ENCODE measurements at regions of chr13 and their contacts with region 1.

Region 1: GRCh38 chr13:39263033-39263432 is 224.8 kb downstream of the NHLRC3 start:
- DNase-seq: peak; percentile 18 to 40 (median 30)
- ATAC-seq: peak; percentile 84
- H3K4me3 ChIP-seq: no peak overlapping the region
- H3K27ac ChIP-seq: no peak overlapping the region
- H3K4me1 ChIP-seq: no peaks in the 10 kb centered on the region
- H3K27me3 ChIP-seq: no peaks in the 10 kb centered on the region
- CTCF ChIP-seq: peak; percentile 33 to 47 (median 41); a peak in 5 of 6 replicates
- EP300 ChIP-seq: no peak
- POLR2A ChIP-seq: no peak
- RAD21 ChIP-seq: peak in 1 of 2 experiments; percentile 46; a peak in 2 of 4 replicates

Region 2: GRCh38 chr13:38914070-38914469 is 349.0 kb before region 1 on chr13:
- CTCF ChIA-PET with region 1: no interaction called
- POLR2A ChIA-PET with region 1: no interaction called
- in situ Hi-C with region 1: no loop called
- intact Hi-C with region 1: no loop called
- DNase-seq: no peak
- ATAC-seq: no peak
- H3K4me3 ChIP-seq: no peak overlapping the region
- H3K27ac ChIP-seq: no peak overlapping the region
- H3K4me1 ChIP-seq: no peaks in the 10 kb centered on the region
- H3K27me3 ChIP-seq: no peaks in the 10 kb centered on the region
- CTCF ChIP-seq: no peak
- EP300 ChIP-seq: no peak
- POLR2A ChIP-seq: no peak
- RAD21 ChIP-seq: no peak

Region 3: DNA sequence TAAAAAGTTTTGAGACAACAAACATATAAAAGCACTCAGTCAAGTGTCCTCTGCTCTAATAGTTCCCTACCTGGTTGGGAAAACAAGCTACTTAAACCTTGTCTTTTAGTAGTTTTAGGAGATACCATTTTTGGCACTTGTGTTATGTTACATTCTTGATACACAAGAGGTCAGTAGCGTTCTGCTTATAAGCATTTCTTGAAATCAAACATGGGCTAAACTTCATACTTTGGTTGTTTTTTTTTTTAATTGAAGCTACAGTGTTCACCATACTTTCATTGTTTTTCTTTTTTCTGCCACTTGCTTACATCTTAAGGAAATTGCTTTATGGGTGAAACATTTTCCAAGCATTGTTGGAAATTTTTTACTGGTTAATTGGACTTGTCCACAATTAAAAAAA is 211.9 kb before region 1 on chr13:
- CTCF ChIA-PET with region 1: no interaction called
- POLR2A ChIA-PET with region 1: no interaction called
- in situ Hi-C with region 1: no loop called
- intact Hi-C with region 1: loop called (anchors 10 kb)
- DNase-seq: peak in 1 of 4 experiments; percentile 15
- ATAC-seq: 0 out of 3 replicates have a peak, but pooled peaks have one; percentile 37
- H3K4me3 ChIP-seq: no peak overlapping the region
- H3K27ac ChIP-seq: no peak overlapping the region
- H3K4me1 ChIP-seq: no peaks in the 10 kb centered on the region
- H3K27me3 ChIP-seq: no peaks in the 10 kb centered on the region
- CTCF ChIP-seq: peak; percentile 8 to 38 (median 19); a peak in 2 of 6 replicates
- EP300 ChIP-seq: no peak
- POLR2A ChIP-seq: no peak
- RAD21 ChIP-seq: peak in 1 of 2 experiments; percentile 4; a peak in 1 of 4 replicates

Region 4: GRCh38 chr13:39144941-39145533 is 118.0 kb before region 1 on chr13:
- CTCF ChIA-PET with region 1: no interaction called
- POLR2A ChIA-PET with region 1: no interaction called
- in situ Hi-C with region 1: no loop called
- intact Hi-C with region 1: loop called (anchors 2 kb)
- DNase-seq: peak; percentile 13 to 41 (median 28)
- ATAC-seq: peak; percentile 69
- H3K4me3 ChIP-seq: no peak overlapping the region
- H3K27ac ChIP-seq: no peak overlapping the region
- H3K4me1 ChIP-seq: no peaks in the 10 kb centered on the region
- H3K27me3 ChIP-seq: no peaks in the 10 kb centered on the region
- CTCF ChIP-seq: peak; percentile 50 to 58 (median 56); a peak in 5 of 6 replicates
- EP300 ChIP-seq: no peak
- POLR2A ChIP-seq: no peak
- RAD21 ChIP-seq: peak in 1 of 2 experiments; percentile 55; a peak in 3 of 4 replicates

Measured in K562 (cell line).